ENCODE measurements at regions of chr7 and their contacts with region 1.

Region 1: GRCh38 chr7:137873989-137874777 is 27.4 kb upstream of the DGKI start:
- DNase-seq: no peak

Region 2: GRCh38 chr7:137681657-137682562 is 192.3 kb before region 1 on chr7:
- intact Hi-C with region 1: loop called (anchors 10 kb)
- DNase-seq: no peak

Region 3: DNA sequence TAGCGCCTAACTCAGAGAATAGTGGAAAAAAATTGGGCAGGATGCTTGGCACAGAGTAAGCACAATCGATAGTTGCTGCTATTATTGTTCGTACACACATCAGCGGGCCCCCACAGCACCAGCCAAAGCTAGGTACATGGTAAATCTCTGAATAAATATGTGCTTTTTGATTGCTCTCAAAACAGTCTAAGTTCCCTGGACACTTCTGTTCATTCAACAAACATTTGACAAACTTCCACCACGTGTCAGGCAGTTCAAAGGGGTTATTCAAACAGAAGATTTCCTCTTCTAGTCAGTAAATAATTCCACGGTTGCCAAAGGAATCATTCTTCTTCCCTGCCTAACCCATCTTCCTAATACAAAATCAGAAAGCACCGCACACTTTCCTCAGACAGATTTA is 178.2 kb before region 1 on chr7:
- intact Hi-C with region 1: no loop called
- DNase-seq: no peak

Region 4: GRCh38 chr7:137727413-137727812 is 146.8 kb before region 1 on chr7:
- intact Hi-C with region 1: no loop called
- DNase-seq: no peak

Measured in cardiac septum (tissue), 1 donor.